Heart right ventricle (tissue), 16 donors: ENCODE measurements at regions of chr7 and their contacts with region 1.

Region 1: DNA sequence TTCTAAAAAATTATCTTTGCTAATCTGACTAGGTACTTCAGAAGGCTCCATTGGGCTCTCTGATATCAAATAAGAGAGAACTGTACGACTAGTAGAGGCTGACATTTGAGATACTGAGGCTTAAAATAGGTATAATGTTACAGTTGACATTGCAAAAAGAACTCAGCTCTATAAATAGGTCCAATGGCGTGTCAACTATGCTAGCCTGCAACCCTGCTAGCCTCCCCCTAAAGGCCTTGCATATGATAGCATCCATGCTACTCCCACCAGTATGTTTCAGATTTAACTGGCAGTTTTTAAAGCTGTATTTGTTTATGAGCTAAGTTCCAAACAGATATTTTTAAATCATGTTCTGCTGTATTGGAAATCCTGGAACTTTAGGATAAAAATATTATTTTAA is at the start of gene PPP1R3A:
- DNase-seq: peak in 1 of 2 donors; percentile 29
- ATAC-seq: peak; percentile 82 to 98 (median 95)
- H3K4me3 ChIP-seq: peak within 1 kb of the TSS in 9 of 10 donors; percentile 28 to 56 (median 49)
- H3K27ac ChIP-seq: peak within 1 kb of the TSS; percentile 32 to 91 (median 77)
- H3K4me1 ChIP-seq: peaks cover 0 to 3% (median 0%) of the 10 kb centered on the region in 9 donors
- H3K27me3 ChIP-seq: no peaks in the 10 kb centered on the region
- CTCF ChIP-seq: peak in 7 of 9 donors; percentile 26 to 54 (median 32)
- total RNA-seq, gene PPP1R3A: 75.7 to 156 (median 129) TPM

Region 2: DNA sequence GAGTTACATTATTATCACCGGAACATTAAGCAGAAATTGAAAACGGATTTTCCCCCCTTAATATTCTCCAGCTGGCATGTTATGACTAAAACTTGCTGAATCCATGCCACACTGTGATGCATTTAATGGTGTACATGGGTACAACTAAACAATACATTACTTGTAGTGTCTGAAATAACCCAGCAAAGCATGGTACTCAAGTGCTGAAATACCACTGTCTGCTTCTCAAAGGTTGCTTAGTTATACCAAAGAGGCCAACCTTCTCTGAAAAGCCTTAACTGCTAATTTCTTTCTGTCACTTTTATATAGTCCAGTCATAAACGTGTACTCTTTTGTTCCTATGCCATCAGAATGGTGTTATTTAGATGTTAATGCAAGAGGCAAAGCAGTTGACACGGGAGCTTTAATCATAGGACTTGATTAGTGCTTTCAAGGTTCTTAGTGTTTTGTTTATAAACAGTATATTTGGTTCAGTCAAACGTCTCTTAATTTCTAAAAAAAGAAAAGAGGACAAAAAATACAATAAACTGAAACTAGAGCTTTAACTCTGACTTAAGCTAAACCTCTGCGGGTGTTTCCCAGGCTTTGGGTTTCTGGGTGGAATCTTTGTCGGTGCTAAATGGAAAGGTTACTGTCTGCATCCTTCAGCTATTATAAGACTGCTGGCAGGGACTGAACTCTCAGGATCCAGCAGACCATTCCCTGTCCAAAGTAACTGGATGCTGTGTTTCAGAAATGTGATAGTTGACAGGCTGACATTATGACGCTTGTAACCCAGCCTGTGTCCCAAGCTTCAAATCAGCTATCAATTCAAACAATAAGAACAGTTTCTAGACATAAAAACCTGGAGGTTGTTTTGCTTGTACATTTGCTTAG is 202.7 kb before region 1 on chr7:
- intact Hi-C with region 1: loop called in 1 of 10 experiments (anchors 5 kb)
- DNase-seq: peak in 1 of 2 donors; percentile 42
- ATAC-seq: peak; percentile 52 to 99 (median 95)
- H3K4me3 ChIP-seq: no peak overlapping the region
- H3K27ac ChIP-seq: peak overlapping the region; percentile 39 to 88 (median 78)
- H3K4me1 ChIP-seq: peaks cover 0 to 13% (median 4%) of the 10 kb centered on the region in 9 donors
- H3K27me3 ChIP-seq: no peaks in the 10 kb centered on the region
- CTCF ChIP-seq: no peak

Region 3: DNA sequence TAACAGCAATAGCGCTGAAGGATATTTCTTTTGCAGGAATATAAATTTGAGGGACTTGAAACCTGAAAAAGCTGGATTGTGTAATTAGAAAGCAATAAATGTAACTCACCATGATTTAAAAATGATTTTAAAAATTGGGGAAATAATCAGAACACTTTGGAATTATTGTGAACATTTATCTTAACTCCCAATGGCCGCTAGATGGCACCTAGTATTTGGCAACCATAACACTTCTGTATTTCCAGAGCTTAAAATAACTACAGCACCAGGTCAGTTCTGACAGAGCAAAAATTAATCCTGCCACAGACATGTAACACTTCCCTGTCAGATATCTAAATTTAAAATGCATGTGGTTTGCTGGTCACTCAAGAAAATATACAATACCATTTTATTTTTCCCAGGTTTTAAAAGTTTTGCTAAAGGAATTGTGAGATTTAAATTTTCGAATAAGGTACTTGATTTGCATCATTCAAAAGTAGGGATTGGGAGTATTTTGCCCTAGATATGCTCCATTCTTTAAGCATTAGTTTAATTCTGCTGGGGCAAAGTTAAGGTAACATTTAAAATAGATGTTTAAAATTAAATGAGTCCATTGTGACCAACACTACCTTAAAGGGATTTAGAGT is 144.7 kb before region 1 on chr7:
- intact Hi-C with region 1: loop called in 1 of 10 experiments (anchors 5 kb)
- DNase-seq: peak in 1 of 2 donors; percentile 31
- ATAC-seq: peak in 7 of 8 donors; percentile 53 to 86 (median 76)
- H3K4me3 ChIP-seq: no peak overlapping the region
- H3K27ac ChIP-seq: peak overlapping the region in 1 of 10 donors; percentile 37
- H3K4me1 ChIP-seq: peaks cover 0 to 8% (median 4%) of the 10 kb centered on the region in 9 donors
- H3K27me3 ChIP-seq: no peaks in the 10 kb centered on the region
- CTCF ChIP-seq: peak; percentile 25 to 66 (median 53)

Region 4: DNA sequence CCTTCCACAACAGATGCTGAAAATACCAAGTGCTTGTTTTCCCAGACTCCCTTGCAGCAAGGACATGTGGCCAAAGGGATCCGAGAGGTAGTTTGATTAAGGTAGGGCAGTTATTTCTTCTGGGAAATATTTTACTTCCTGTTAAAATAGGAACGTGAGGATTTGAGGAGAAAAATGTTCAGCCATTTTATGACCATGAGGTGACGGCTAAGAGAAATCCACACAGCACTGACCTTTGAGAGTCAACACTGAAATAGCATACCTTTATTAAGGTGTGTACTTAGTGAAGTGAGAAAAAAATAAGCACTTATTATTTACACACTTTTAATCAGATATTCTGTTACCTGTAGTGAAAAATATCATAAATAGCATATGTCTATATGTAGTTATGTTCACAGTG is 134.0 kb before region 1 on chr7:
- intact Hi-C with region 1: loop called in 3 of 10 experiments (anchors 5 to 10 kb)
- DNase-seq: no peak
- ATAC-seq: no peak
- H3K4me3 ChIP-seq: no peak overlapping the region
- H3K27ac ChIP-seq: no peak overlapping the region
- H3K4me1 ChIP-seq: no peaks in the 10 kb centered on the region
- H3K27me3 ChIP-seq: no peaks in the 10 kb centered on the region
- CTCF ChIP-seq: no peak

Region 5: GRCh38 chr7:113799896-113800295 is 119.0 kb before region 1 on chr7:
- intact Hi-C with region 1: loop called in 1 of 10 experiments (anchors 10 kb)
- DNase-seq: no peak
- ATAC-seq: no peak
- H3K4me3 ChIP-seq: no peak overlapping the region
- H3K27ac ChIP-seq: no peak overlapping the region
- H3K4me1 ChIP-seq: no peaks in the 10 kb centered on the region
- H3K27me3 ChIP-seq: no peaks in the 10 kb centered on the region
- CTCF ChIP-seq: no peak